Common myeloid progenitor, CD34-positive (primary cell): ENCODE measurements at regions of chr15 and their contacts with region 1.

Region 1: DNA sequence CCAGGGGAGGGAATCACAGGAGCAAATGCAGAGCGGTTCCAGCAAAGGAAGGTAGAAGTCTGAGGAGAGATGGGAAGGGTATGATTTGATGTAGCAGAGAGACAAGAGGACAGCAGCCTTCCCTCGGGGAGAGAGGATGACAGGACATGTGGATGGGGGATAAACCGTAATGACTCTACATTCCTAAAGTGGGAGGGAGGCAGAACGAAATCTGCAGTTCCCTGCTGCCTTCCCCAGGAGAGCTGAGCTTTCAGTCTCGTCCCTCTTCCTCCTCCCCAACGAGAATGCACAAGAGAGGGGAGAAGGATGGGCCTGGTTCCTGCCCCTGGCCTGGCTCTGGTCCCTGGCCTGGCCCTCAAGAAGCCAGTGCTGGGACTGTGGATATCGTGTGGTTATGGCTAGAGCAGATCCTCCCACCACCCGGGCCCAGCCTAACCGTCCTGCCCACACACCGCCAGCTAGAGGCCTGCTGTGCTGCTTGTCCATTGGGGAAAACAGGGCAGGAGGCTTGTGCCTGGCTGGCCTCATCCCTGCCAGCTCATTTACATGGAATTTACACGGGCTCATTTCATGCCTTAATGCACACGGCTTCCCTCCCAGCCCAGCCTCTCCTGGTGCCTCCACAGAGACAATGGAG is 26.6 kb downstream of the SEMA7A start:
- DNase-seq: no peak
- H3K4me3 ChIP-seq: no peak overlapping the region
- H3K27ac ChIP-seq: no peak overlapping the region
- H3K4me1 ChIP-seq: peaks cover 10 to 47% (median 24%) of the 10 kb centered on the region in 4 experiments
- H3K27me3 ChIP-seq: no peaks in the 10 kb centered on the region

Region 2: DNA sequence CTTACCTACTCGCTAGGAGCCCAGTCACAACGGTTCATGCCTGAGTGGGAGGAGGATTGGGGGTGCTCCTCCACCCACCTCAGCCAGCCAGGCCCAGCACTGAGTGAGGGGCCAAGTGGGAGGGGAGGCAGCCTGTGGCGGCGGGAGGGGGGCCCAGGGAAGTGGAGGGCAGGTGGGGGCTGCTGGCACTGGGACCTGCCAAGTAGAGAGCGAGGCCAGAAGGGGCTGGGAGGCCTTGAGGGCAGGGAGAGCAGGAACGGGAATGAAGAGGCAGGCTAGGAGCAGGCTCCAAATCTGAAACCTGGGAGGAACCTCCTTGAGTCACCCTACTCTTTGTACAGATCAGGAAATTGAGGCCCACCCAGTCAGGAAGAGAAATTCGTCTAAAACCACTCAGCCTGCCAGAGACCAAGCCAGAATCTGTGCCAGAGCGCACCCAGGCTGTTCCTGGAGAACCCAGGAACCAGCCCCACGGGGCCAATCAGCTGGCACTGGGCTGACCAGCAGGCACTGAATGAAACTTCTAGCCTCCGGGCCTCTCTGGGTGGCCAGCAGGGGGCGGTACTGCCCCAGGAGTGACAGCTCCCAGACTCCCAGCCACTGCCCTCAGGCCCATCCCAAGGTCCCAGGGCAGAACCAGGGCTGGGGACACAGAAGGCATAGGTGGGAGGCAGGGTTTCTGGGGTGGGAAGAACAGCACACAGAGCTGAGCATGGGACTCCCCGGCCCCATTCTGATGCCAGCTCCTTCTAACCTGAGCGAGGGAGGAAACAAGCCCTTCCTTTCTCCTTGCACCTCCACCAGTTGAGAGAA is 25.0 kb before region 1 on chr15:
- CTCF ChIA-PET with region 1: interaction called, 82 read pairs
- POLR2A ChIA-PET with region 1: interaction called, 12 read pairs
- DNase-seq: peak; percentile 59 to 68 (median 65)
- H3K4me3 ChIP-seq: no peak overlapping the region
- H3K27ac ChIP-seq: no peak overlapping the region
- H3K4me1 ChIP-seq: peaks cover 0 to 61% (median 51%) of the 10 kb centered on the region in 4 experiments
- H3K27me3 ChIP-seq: no peaks in the 10 kb centered on the region

Region 3: GRCh38 chr15:74392451-74392830 is 14.7 kb before region 1 on chr15:
- CTCF ChIA-PET with region 1: interaction called, 82 read pairs
- POLR2A ChIA-PET with region 1: interaction called, 7 read pairs
- DNase-seq: peak in 1 of 3 donors; percentile 17
- H3K4me3 ChIP-seq: peak overlapping the region in 1 of 7 experiments; percentile 6
- H3K27ac ChIP-seq: peak overlapping the region in 1 of 2 experiments; percentile 50
- H3K4me1 ChIP-seq: peaks cover 0 to 84% (median 79%) of the 10 kb centered on the region in 4 experiments
- H3K27me3 ChIP-seq: no peaks in the 10 kb centered on the region

Region 4: GRCh38 chr15:74428442-74428787 is 21.2 kb after region 1 on chr15:
- CTCF ChIA-PET with region 1: interaction called, 17 read pairs
- POLR2A ChIA-PET with region 1: interaction called, 3 read pairs
- DNase-seq: no peak
- H3K4me3 ChIP-seq: peak overlapping the region in 2 of 7 experiments; percentile 10 to 16
- H3K27ac ChIP-seq: no peak overlapping the region
- H3K4me1 ChIP-seq: peaks cover 0 to 62% (median 40%) of the 10 kb centered on the region in 4 experiments
- H3K27me3 ChIP-seq: peaks cover 0 to 7% (median 0%) of the 10 kb centered on the region in 5 experiments

Region 5: GRCh38 chr15:74433592-74434262 is 26.6 kb after region 1 on chr15 and contains the start of gene SEMA7A:
- CTCF ChIA-PET with region 1: interaction called, 22 read pairs
- POLR2A ChIA-PET with region 1: interaction called, 3 read pairs
- DNase-seq: peak; percentile 74 to 84 (median 82)
- H3K4me3 ChIP-seq: peak within 1 kb of the TSS; percentile 68 to 90 (median 87)
- H3K27ac ChIP-seq: peak within 1 kb of the TSS; percentile 36 to 74
- H3K4me1 ChIP-seq: peaks cover 0 to 65% (median 54%) of the 10 kb centered on the region in 4 experiments
- H3K27me3 ChIP-seq: peaks cover 0 to 7% (median 0%) of the 10 kb centered on the region in 5 experiments

Region 6: GRCh38 chr15:74438721-74439316 is 31.6 kb after region 1 on chr15:
- CTCF ChIA-PET with region 1: interaction called, 22 read pairs
- POLR2A ChIA-PET with region 1: interaction called, 3 read pairs
- DNase-seq: peak; percentile 80 to 89 (median 84)
- H3K4me3 ChIP-seq: no peak overlapping the region
- H3K27ac ChIP-seq: no peak overlapping the region
- H3K4me1 ChIP-seq: peaks cover 0 to 38% (median 24%) of the 10 kb centered on the region in 4 experiments
- H3K27me3 ChIP-seq: no peaks in the 10 kb centered on the region